Endothelial cell of umbilical vein (primary cell): ENCODE measurements at regions of chr17 and their contacts with region 1.

Region 1: DNA sequence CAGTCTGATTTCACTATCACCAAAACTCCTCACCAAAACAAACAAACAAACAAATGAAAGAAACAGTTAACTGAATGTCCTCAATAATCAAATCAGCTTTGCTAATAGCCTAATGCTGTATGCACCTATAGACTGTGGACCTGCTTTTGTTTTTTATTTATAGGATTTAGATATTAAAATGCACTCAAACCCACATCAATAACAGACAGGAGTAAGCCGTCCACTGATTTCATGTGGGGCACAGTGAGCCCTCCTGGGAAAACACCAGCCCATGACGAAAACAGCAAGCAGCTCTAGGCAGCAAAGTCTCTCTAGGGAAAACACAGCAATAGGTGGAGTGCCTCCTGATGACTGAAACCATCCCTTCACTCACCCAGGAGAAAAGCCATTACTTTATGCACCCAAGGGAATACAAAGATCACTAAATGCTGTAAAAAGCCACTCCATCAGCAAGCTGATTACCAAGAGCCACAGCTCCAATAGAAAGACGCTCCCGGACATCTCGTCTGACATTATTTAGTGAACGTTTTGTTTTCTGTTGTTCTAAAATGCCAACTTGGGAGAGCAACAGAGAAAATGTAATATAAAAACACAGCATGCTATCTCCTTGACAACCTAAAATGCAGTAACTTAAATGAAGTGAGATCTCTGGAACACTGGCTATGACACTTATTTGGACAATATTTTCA is 47.8 kb downstream of the ANKFY1 start:
- DNase-seq: no peak
- H3K4me3 ChIP-seq: no peak overlapping the region
- H3K27ac ChIP-seq: no peak overlapping the region
- H3K4me1 ChIP-seq: no peaks in the 10 kb centered on the region
- H3K27me3 ChIP-seq: no peaks in the 10 kb centered on the region
- CTCF ChIP-seq: no peak
- POLR2A ChIP-seq: no peak

Region 2: GRCh38 chr17:4229627-4230541 is 13.9 kb after region 1 on chr17:
- CTCF ChIA-PET with region 1: interaction called, 39 read pairs
- POLR2A ChIA-PET with region 1: no interaction called
- dilution Hi-C with region 1: no loop called
- intact Hi-C with region 1: no loop called
- DNase-seq: peak; percentile 93
- H3K4me3 ChIP-seq: no peak overlapping the region
- H3K27ac ChIP-seq: no peak overlapping the region
- H3K4me1 ChIP-seq: peaks cover 17% of the 10 kb centered on the region
- H3K27me3 ChIP-seq: no peaks in the 10 kb centered on the region
- CTCF ChIP-seq: no peak
- POLR2A ChIP-seq: no peak

Region 3: DNA sequence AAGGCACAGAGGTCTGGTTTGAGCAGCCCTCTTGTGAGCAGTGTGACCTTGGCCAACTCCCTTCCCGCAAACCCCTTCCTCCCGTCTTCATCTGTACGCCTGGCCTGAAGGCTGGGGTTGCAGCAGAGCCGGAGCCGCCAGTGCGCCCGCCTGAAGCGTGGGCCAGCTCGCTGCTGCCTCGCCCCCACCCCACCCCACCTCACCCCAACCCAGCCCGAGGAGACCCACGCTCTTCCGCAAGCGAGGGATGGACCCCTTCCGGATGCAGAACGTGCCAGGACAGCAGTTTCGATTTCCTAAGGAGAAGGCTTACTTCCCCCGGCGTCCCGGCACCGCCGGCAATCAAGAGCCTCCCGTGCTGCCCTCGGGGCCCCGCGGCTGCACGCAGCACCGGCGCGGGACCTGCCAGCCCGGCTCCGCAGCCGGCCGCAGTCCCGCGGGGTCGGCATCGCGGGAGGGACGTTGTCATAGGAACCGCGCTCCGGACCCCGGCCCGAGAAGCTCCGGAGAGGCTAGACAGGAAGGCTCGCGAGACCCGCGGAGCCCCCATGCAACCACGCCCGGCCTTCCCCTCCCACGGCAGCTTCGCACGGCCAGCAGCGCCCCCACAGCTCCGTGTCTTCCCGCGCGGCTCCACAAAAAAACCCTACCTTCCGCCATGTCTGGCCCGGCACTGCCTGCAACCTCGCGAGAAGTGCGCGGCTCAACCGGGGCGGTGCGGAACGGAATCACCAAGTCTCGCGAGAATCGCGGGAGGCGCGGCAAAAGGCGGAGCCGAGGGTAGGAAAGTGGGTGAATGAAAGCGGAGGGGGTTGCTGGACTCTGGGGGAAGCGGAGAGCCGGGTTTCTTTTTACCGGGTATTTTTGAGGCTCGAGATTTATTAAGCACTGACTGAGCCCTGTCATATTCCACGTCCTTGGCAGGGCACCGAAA is 47.5 kb after region 1 on chr17 and contains the start of gene ANKFY1:
- CTCF ChIA-PET with region 1: interaction called, 8 read pairs
- POLR2A ChIA-PET with region 1: no interaction called
- dilution Hi-C with region 1: no loop called
- intact Hi-C with region 1: loop called (anchors 5 kb)
- DNase-seq: peak; percentile 97
- H3K4me3 ChIP-seq: peak within 1 kb of the TSS; percentile 69 to 97 (median 70)
- H3K27ac ChIP-seq: peak within 1 kb of the TSS; percentile 72
- H3K4me1 ChIP-seq: peaks cover 16% of the 10 kb centered on the region
- H3K27me3 ChIP-seq: no peaks in the 10 kb centered on the region
- CTCF ChIP-seq: no peak
- POLR2A ChIP-seq: peak; percentile 70
- total RNA-seq, gene ANKFY1: 45.4 and 51.1 TPM in 2 replicates

Region 4: GRCh38 chr17:4366327-4367063 is 150.5 kb after region 1 on chr17 and contains the start of gene UBE2G1:
- CTCF ChIA-PET with region 1: interaction called, 3 read pairs
- POLR2A ChIA-PET with region 1: no interaction called
- dilution Hi-C with region 1: no loop called
- intact Hi-C with region 1: loop called (anchors 1 kb)
- DNase-seq: peak; percentile 98
- H3K4me3 ChIP-seq: peak within 1 kb of the TSS; percentile 61 to 94 (median 88)
- H3K27ac ChIP-seq: peak within 1 kb of the TSS; percentile 65
- H3K4me1 ChIP-seq: peaks cover 4% of the 10 kb centered on the region
- H3K27me3 ChIP-seq: no peaks in the 10 kb centered on the region
- CTCF ChIP-seq: peak in 1 of 2 donors; percentile 9
- POLR2A ChIP-seq: peak; percentile 52
- total RNA-seq, gene UBE2G1: 77.2 and 79.6 TPM in 2 replicates

Region 5: DNA sequence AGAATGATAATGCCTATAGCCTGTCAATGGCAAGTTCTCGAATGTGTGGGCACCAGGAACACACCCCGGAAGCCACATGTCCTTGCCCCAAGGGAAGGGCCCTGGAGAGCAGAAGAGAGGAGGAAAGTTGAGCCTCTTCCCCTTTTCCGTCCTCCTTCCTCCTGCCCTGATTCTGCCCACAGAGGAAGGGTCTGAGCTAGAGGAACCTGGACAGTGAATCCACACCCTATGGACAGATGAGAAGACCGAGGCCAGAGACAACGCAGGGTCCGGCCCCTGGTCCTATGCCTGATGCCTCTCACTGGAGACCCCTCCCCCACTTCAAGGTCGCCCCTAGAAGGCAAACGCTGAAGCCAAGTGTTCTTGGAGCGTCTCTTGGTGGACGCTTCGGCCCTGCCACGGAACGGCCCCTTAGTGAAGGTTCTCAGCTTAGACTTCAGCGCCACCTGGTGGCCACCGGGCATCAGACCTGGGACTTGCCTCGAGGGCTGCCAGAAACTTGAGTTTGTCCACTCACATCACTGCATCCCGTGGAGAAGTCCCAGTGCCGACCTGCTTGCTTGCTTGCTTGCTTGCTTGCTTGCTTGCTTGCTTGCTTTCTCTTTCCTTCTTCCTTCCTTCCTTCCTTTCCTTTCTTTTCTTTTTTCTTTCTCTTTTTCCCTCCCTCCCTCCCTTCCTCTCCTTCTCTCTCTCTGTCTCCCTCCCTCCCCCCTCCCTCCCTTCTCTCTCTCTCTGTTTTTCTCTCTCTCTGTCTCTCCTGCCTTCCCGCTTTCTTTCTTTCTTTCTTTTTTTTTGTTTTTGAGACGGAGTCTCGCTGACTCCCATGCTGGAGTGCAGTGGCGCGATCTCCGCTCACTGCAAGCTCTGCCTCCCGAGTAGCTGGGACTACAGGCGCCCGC is 197.2 kb after region 1 on chr17:
- CTCF ChIA-PET with region 1: interaction called, 152 read pairs
- POLR2A ChIA-PET with region 1: no interaction called
- dilution Hi-C with region 1: no loop called
- intact Hi-C with region 1: loop called (anchors 1 kb)
- DNase-seq: peak; percentile 85
- H3K4me3 ChIP-seq: no peak overlapping the region
- H3K27ac ChIP-seq: no peak overlapping the region
- H3K4me1 ChIP-seq: no peaks in the 10 kb centered on the region
- H3K27me3 ChIP-seq: no peaks in the 10 kb centered on the region
- CTCF ChIP-seq: peak; percentile 84 to 95
- POLR2A ChIP-seq: no peak

Region 6: DNA sequence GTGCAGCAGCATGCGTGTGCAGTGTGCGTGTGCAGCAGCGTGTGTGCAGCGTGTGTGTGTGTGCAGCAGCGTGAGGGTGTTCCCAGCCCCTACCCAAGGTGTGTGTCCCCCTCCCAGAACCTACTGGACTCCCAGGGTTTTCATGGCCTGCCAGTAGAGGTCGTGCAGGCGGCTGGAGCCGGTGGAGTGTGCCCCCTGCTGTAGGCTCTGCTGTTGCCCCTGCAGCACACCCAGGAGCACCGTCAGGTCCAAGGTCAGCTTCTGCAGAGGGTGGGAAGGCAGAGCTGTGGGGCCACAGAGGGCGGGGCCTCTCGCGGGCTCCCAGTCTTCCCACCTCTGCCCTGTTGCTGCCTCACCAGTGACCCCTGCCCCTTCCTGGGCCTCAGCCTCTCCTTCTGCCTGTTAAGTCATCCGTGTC is 324.2 kb after region 1 on chr17:
- CTCF ChIA-PET with region 1: no interaction called
- POLR2A ChIA-PET with region 1: no interaction called
- dilution Hi-C with region 1: no loop called
- intact Hi-C with region 1: loop called (anchors 2 kb)
- DNase-seq: no peak
- H3K4me3 ChIP-seq: no peak overlapping the region
- H3K27ac ChIP-seq: no peak overlapping the region
- H3K4me1 ChIP-seq: peaks cover 43% of the 10 kb centered on the region
- H3K27me3 ChIP-seq: no peaks in the 10 kb centered on the region
- CTCF ChIP-seq: peak; percentile 48 to 72
- POLR2A ChIP-seq: no peak